ENCODE measurements at regions of chr1 and their contacts with region 1.

Region 1: GRCh38 chr1:86546787-86547221 is at the start of gene CLCA4:
- DNase-seq: no peak
- H3K4me3 ChIP-seq: peak within 1 kb of the TSS in 1 of 4 donors; percentile 19
- H3K27ac ChIP-seq: peak within 1 kb of the TSS in 2 of 4 donors; percentile 3 to 68
- H3K4me1 ChIP-seq: peaks cover 0 to 15% (median 4%) of the 10 kb centered on the region in 4 donors
- H3K27me3 ChIP-seq: no peaks in the 10 kb centered on the region
- CTCF ChIP-seq: no peak
- EP300 ChIP-seq: no peak
- POLR2A ChIP-seq: peak; percentile 47
- total RNA-seq, gene CLCA4: 0.40 to 1,312 (median 849) TPM

Region 2: GRCh38 chr1:86583593-86583992 is 36.8 kb after region 1 on chr1:
- in situ Hi-C with region 1: no loop called
- intact Hi-C with region 1: loop called (anchors 1 kb)
- DNase-seq: no peak
- H3K4me3 ChIP-seq: no peak overlapping the region
- H3K27ac ChIP-seq: no peak overlapping the region
- H3K4me1 ChIP-seq: peaks cover 0 to 6% (median 4%) of the 10 kb centered on the region in 4 donors
- H3K27me3 ChIP-seq: no peaks in the 10 kb centered on the region
- CTCF ChIP-seq: no peak
- EP300 ChIP-seq: no peak
- POLR2A ChIP-seq: no peak